Endothelial cell of umbilical vein (primary cell): ENCODE measurements at regions of chr3 and their contacts with region 1.

Region 1: GRCh38 chr3:71444028-71444860 is 139.3 kb downstream of the FOXP1 start:
- DNase-seq: peak; percentile 85
- H3K4me3 ChIP-seq: no peak overlapping the region
- H3K27ac ChIP-seq: peak overlapping the region; percentile 65
- H3K4me1 ChIP-seq: peaks cover 20% of the 10 kb centered on the region
- H3K27me3 ChIP-seq: no peaks in the 10 kb centered on the region
- CTCF ChIP-seq: no peak
- POLR2A ChIP-seq: no peak

Region 2: DNA sequence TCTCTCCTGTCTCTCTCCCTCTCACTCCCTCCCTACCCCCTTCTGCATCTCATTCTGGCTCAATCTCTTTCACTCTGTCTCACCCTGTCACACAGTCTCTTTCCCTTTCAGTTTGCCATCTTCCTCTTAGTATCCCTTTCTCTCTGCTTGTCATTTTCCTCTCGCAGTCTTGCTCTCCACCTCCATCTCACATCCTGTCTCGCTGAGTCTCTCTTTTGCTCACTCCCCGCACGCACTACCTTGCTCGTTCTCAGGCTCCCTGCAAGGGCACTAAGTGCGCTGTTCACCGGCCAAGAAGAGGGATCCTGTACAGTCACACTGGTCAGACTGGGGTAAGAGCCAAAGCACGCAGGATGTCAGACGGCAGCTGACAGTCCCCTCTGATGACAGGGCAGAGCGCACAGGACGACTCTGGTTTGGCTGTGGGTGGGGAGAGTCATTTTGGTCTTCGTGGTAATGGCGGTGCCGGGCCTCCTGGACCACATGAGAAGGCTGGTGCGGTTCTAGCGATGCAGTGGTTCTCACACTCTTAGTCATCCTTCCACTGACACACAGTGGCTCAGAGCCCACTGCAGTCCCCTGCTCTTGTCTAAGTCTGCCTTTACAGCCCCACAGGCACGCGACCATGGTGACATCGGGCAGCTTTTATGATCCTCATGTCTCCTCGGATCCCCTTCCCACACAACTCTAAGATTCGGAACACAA is 217.5 kb before region 1 on chr3:
- CTCF ChIA-PET with region 1: no interaction called
- POLR2A ChIA-PET with region 1: no interaction called
- dilution Hi-C with region 1: no loop called
- intact Hi-C with region 1: loop called (anchors 1 kb)
- DNase-seq: no peak
- H3K4me3 ChIP-seq: no peak overlapping the region
- H3K27ac ChIP-seq: peak overlapping the region; percentile 66
- H3K4me1 ChIP-seq: peaks cover 24% of the 10 kb centered on the region
- H3K27me3 ChIP-seq: no peaks in the 10 kb centered on the region
- CTCF ChIP-seq: no peak
- POLR2A ChIP-seq: no peak

Region 3: DNA sequence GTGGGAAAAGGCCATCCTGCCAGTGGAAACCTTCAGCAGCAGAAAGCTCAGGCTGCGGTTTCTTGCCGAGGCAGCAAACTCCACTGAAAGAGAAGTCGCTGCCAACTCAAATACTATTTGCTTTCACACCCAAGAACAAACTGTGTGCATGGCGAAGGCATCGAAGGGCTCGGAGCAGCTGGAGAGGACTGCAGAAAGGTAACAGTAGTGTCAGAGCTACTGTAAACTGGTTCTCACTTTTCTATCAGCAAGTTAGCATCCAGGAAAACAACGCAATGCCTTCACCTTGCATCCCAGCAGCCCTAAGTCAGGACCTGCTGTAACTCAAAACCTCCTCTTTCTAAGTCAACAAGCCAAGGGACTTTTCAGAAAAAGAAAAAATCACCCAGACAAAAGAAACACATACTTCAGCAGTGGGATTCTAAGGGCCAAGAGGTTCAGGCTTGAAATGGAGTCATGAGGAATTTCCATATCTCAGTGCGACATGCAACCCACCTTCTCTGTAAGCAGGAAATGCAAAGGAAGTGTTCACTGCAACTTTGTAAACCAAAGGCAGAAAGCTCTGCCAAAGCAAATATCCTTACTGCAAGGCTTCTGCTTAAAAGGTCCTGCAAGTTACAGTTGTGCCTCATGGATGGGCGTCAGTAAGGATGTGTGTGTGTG is 54.2 kb before region 1 on chr3:
- CTCF ChIA-PET with region 1: no interaction called
- POLR2A ChIA-PET with region 1: no interaction called
- dilution Hi-C with region 1: no loop called
- intact Hi-C with region 1: loop called (anchors 1 kb)
- DNase-seq: peak; percentile 95
- H3K4me3 ChIP-seq: peak overlapping the region in 1 of 3 experiments; percentile 29
- H3K27ac ChIP-seq: peak overlapping the region; percentile 88
- H3K4me1 ChIP-seq: peaks cover 41% of the 10 kb centered on the region
- H3K27me3 ChIP-seq: no peaks in the 10 kb centered on the region
- CTCF ChIP-seq: no peak
- POLR2A ChIP-seq: peak; percentile 37

Region 4: GRCh38 chr3:71414189-71414927 is 29.9 kb before region 1 on chr3:
- CTCF ChIA-PET with region 1: no interaction called
- POLR2A ChIA-PET with region 1: no interaction called
- dilution Hi-C with region 1: no loop called
- intact Hi-C with region 1: loop called (anchors 1 kb)
- DNase-seq: no peak
- H3K4me3 ChIP-seq: no peak overlapping the region
- H3K27ac ChIP-seq: peak overlapping the region; percentile 86
- H3K4me1 ChIP-seq: peaks cover 16% of the 10 kb centered on the region
- H3K27me3 ChIP-seq: no peaks in the 10 kb centered on the region
- CTCF ChIP-seq: no peak
- POLR2A ChIP-seq: no peak

Region 5: DNA sequence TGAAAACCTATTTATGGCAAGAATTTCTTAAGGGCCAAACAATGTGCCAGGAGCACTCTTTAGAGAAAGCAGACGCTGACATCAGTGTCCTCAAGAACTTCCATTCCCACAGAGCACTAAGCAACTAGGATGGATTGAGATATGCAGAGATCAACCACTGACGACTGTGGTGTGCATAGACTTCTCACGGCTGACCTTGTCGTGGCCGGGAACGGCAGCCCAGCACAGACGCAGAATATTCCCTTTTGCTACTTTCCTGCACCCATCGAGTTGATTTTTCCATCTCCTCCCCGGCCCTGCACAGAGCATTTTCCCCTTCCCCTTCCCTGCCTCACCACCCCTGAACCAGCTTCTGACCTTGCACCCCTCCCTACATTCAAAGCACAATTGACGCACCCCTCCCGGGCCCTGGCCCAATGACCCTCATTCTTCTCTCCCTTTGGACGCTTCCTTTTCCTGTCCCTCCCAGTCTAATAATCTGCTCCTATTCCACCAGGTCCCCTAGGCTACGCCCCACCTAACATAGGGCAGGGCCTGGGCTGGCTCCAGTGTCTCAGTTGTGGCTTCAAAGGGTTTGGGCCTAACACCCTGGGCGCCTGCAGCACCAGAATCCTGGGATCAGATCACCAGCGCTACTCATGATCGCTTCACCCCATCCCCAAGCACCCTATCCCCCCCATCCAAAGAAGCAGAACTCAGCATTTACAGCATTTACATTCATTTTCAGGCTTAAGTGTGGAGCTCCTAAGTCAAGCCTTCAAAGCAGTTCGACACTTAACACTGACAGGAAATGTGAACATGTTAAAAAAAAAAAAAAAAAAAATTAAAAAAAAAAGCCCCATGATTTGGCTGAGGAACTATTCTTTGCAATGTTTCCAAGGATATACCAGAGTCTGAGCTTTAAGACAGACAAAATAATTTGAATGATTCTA is 11.9 kb before region 1 on chr3:
- CTCF ChIA-PET with region 1: no interaction called
- POLR2A ChIA-PET with region 1: no interaction called
- dilution Hi-C with region 1: no loop called
- intact Hi-C with region 1: no loop called
- DNase-seq: no peak
- H3K4me3 ChIP-seq: no peak overlapping the region
- H3K27ac ChIP-seq: no peak overlapping the region
- H3K4me1 ChIP-seq: peaks cover 17% of the 10 kb centered on the region
- H3K27me3 ChIP-seq: no peaks in the 10 kb centered on the region
- CTCF ChIP-seq: no peak
- POLR2A ChIP-seq: no peak

Region 6: GRCh38 chr3:71466483-71466882 is 22.2 kb after region 1 on chr3:
- CTCF ChIA-PET with region 1: interaction called, 5 read pairs
- POLR2A ChIA-PET with region 1: no interaction called
- dilution Hi-C with region 1: no loop called
- intact Hi-C with region 1: loop called (anchors 1 kb)
- DNase-seq: peak; percentile 89
- H3K4me3 ChIP-seq: peak overlapping the region in 1 of 3 experiments; percentile 9
- H3K27ac ChIP-seq: no peak overlapping the region
- H3K4me1 ChIP-seq: peaks cover 16% of the 10 kb centered on the region
- H3K27me3 ChIP-seq: no peaks in the 10 kb centered on the region
- CTCF ChIP-seq: no peak
- POLR2A ChIP-seq: no peak